ENCODE measurements at regions of chr1 and their contacts with region 1.

Region 1: GRCh38 chr1:213015099-213016050 is at the start of gene ANGEL2:
- DNase-seq: peak; percentile 90 to 91
- H3K4me3 ChIP-seq: peak within 1 kb of the TSS; percentile 81
- H3K27ac ChIP-seq: peak within 1 kb of the TSS; percentile 65
- H3K4me1 ChIP-seq: peaks cover 15% of the 10 kb centered on the region; the same call in 1 of the 2 replicates
- H3K27me3 ChIP-seq: no peaks in the 10 kb centered on the region
- CTCF ChIP-seq: no peak
- total RNA-seq, gene ANGEL2: 35.4 and 42.6 TPM in 2 replicates

Region 2: DNA sequence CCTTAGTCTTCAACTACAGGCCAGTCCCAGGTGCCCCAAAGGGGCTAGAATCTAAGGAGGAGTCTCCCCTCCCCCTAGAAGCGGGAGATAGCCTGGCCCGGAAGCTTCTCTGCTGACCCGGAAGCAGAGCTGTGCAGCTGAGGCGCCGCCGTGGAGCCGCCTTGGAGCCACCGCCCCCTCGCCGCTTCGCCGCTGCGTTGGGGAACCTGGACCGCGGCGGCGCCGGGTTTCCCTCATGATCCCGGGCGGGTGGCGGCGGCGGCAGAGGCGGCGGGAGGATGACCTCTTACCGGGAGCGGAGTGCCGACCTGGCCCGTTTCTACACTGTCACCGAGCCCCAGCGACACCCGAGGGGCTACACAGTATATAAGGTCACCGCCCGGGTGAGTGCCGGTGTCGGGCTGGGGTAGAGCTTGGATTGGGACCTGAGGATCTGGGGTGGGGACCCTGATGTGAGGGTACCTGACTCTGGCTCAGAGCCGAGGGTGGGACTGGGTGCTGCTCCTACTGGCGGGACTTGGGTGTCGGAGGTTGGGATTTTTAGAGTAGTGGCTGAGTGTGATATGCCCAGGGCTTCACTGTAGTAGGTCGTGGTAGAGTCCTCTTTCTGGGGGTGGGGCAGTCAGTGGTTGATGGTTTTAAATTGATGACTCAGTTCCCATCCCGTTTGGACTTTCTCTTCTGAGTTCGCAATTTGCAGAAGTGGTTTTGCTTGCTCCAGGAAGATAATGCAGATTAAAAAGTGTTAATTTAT is 35.9 kb after region 1 on chr1 and contains the start of gene RPS6KC1:
- CTCF ChIA-PET with region 1: no interaction called
- POLR2A ChIA-PET with region 1: no interaction called
- intact Hi-C with region 1: loop called (anchors 1 kb)
- DNase-seq: peak; percentile 69 to 78
- H3K4me3 ChIP-seq: peak within 1 kb of the TSS; percentile 92
- H3K27ac ChIP-seq: peak within 1 kb of the TSS; percentile 41
- H3K4me1 ChIP-seq: peaks cover 16% of the 10 kb centered on the region
- H3K27me3 ChIP-seq: no peaks in the 10 kb centered on the region
- CTCF ChIP-seq: peak; percentile 34; the same call in 1 of the 2 replicates
- total RNA-seq, gene RPS6KC1: 14.5 and 16.4 TPM in 2 replicates

Region 3: DNA sequence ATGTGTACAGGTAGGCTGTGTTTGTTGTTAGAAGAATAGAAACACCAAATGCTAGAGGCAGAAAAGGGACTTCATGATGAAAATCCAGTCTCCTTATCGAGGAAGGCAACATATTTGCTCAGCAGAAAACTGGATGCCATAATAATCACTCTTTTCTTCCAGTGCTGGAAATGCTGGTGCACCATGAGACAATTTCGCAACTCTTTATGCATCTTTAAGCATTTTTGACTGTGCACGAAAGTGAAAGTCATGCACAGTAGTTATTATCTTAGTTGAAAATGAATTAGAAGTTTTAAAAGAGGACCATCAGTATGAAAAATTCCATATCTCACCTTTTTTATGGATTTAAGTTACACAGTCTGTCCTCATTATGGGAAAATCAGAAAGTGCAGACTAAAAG is 1294.6 kb after region 1 on chr1:
- CTCF ChIA-PET with region 1: no interaction called
- POLR2A ChIA-PET with region 1: no interaction called
- intact Hi-C with region 1: loop called (anchors 5 kb)
- DNase-seq: no peak
- H3K4me3 ChIP-seq: no peak overlapping the region
- H3K27ac ChIP-seq: no peak overlapping the region
- H3K4me1 ChIP-seq: no peaks in the 10 kb centered on the region
- H3K27me3 ChIP-seq: no peaks in the 10 kb centered on the region
- CTCF ChIP-seq: no peak